T-cell (primary cell): ENCODE measurements at regions of chr10 and their contacts with region 1.

Region 1: DNA sequence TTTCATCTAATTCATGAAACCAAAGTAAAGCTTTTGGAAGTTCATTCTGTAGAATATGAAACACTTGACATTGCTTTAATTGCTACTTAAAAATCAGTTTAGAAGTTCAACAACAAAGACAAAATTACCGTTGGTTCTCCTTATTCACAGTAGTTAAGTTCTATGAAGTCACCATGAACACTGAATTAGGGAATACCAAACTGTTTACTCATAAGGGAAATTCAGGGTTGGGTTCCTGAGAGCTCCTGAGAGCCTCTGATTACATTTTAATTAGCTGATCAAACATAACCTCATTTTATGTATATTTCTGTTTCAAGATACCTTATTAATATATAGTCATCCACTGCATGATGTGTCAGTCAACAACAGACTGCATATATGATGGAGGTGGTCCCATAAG is 46.1 kb downstream of the ZNF438 start:
- DNase-seq: no peak
- ATAC-seq: no peak
- H3K4me3 ChIP-seq: no peak overlapping the region
- H3K4me3 Mint-ChIP-seq: no peak overlapping the region
- H3K27ac ChIP-seq: no peak overlapping the region
- H3K27ac Mint-ChIP-seq: no peak overlapping the region
- H3K4me1 ChIP-seq: no peaks in the 10 kb centered on the region
- H3K4me1 Mint-ChIP-seq: peaks cover 0 to 7% (median 4%) of the 10 kb centered on the region in 3 donors
- H3K27me3 ChIP-seq: no peaks in the 10 kb centered on the region
- H3K27me3 Mint-ChIP-seq: no peaks in the 10 kb centered on the region

Region 2: GRCh38 chr10:30999070-30999712 is 13.6 kb after region 1 on chr10:
- CTCF ChIA-PET with region 1: no interaction called
- POLR2A ChIA-PET with region 1: interaction called in 1 of 2 experiments, 15 read pairs
- DNase-seq: peak in 3 of 35 experiments; percentile 3 to 24 (median 5)
- ATAC-seq: peak in 1 of 4 experiments; percentile 23
- H3K4me3 ChIP-seq: peak overlapping the region in 1 of 2 donors; percentile 18
- H3K4me3 Mint-ChIP-seq: peak overlapping the region; percentile 58 to 74 (median 69)
- H3K27ac ChIP-seq: peak overlapping the region; percentile 53
- H3K27ac Mint-ChIP-seq: peak overlapping the region; percentile 84 to 88
- H3K4me1 ChIP-seq: peaks cover 0 to 7% of the 10 kb centered on the region in 2 experiments
- H3K4me1 Mint-ChIP-seq: peaks cover 29 to 44% (median 37%) of the 10 kb centered on the region in 3 donors
- H3K27me3 ChIP-seq: no peaks in the 10 kb centered on the region
- H3K27me3 Mint-ChIP-seq: no peaks in the 10 kb centered on the region